ENCODE measurements at regions of chr2 and their contacts with region 1.

Region 1: DNA sequence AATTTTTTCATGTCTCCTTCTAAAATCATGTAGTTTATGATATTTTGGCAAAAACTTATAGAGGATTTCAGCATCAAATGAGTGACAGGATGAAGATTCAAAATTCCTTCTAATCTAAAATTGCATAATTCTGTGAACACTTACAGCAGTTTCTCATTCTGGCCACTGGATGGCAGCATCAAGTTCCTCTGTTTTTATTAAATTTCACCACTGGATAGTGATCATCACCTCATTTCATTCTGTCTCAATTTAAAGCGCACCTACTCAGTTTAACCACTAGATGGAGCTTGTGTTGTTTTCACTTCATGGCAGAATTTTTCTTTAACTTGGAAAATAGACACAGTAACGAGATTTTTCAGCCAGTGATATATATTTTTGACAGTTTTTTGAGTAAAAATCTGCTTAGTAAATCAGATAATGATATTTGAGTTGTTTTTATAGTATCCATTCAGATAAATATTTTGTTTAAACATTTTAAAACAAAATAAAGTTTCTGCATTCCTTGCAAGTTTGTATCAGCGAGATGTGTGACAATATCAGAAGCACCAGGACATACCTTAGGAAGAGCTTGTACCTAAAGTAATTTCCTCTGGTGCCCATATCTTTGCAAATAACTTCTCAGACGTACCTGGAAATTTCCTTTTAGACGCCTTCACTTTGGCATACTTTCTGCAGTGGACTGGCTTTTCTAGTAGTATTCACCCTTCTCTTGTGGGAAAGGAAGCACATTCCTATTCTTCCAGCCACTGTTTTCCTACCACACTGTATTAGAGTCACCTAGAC is 94.7 kb upstream of the ARHGAP15 start:
- DNase-seq: peak; percentile 78
- ATAC-seq: peak; percentile 88
- H3K4me3 Mint-ChIP-seq: no peak overlapping the region
- H3K27ac Mint-ChIP-seq: no peak overlapping the region
- H3K4me1 Mint-ChIP-seq: peaks cover 8% of the 10 kb centered on the region
- H3K27me3 Mint-ChIP-seq: peaks cover 6% of the 10 kb centered on the region

Region 2: DNA sequence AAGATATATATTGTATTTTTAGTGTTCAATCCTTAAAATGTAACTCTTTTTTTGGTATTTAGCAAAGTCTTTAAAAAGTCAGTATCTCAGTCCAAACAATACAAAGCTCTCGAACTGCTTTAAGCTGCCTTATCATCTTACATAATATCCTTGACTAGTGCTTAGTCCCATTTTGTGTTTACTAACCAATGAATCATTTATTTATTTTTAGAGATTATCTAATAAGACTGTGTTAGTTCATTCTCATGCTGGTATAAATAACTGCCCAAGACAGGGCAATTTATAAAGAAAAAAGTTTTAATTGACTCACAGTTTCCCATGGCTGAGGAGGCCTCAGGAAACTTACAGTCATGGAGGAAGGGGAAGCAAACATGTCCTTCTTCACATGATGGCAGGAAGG is 405.3 kb before region 1 on chr2:
- CTCF ChIA-PET with region 1: no interaction called
- POLR2A ChIA-PET with region 1: no interaction called
- DNase-seq: no peak
- ATAC-seq: no peak
- H3K4me3 Mint-ChIP-seq: no peak overlapping the region
- H3K27ac Mint-ChIP-seq: no peak overlapping the region
- H3K4me1 Mint-ChIP-seq: no peaks in the 10 kb centered on the region
- H3K27me3 Mint-ChIP-seq: no peaks in the 10 kb centered on the region

Region 3: GRCh38 chr2:142741764-142742269 is 292.7 kb before region 1 on chr2:
- CTCF ChIA-PET with region 1: no interaction called
- POLR2A ChIA-PET with region 1: no interaction called
- DNase-seq: no peak
- ATAC-seq: no peak
- H3K4me3 Mint-ChIP-seq: no peak overlapping the region
- H3K27ac Mint-ChIP-seq: no peak overlapping the region
- H3K4me1 Mint-ChIP-seq: no peaks in the 10 kb centered on the region
- H3K27me3 Mint-ChIP-seq: no peaks in the 10 kb centered on the region

Region 4: DNA sequence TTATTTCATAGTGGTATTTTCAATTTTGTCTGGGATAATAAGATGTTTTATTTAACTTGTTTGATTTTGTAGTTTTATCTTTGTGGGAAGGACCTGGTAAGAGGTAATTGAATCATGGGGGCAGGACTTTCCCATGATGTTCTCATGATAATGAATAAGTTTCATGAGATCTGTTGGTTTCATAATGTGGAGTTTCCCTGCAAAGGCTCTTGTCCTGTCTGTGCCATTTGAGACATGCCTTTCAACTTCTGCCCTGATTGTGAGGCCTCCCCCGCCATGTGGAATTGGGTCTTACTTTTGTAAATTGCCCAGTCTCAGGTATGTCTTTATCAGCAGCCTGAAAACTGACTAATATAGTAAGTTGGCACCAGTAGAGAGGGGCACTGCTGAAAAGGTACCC is 17.0 kb after region 1 on chr2:
- CTCF ChIA-PET with region 1: interaction called, 18 read pairs
- POLR2A ChIA-PET with region 1: interaction called, 3 read pairs
- DNase-seq: no peak
- ATAC-seq: no peak
- H3K4me3 Mint-ChIP-seq: no peak overlapping the region
- H3K27ac Mint-ChIP-seq: no peak overlapping the region
- H3K4me1 Mint-ChIP-seq: no peaks in the 10 kb centered on the region
- H3K27me3 Mint-ChIP-seq: peaks cover 4% of the 10 kb centered on the region

Region 5: DNA sequence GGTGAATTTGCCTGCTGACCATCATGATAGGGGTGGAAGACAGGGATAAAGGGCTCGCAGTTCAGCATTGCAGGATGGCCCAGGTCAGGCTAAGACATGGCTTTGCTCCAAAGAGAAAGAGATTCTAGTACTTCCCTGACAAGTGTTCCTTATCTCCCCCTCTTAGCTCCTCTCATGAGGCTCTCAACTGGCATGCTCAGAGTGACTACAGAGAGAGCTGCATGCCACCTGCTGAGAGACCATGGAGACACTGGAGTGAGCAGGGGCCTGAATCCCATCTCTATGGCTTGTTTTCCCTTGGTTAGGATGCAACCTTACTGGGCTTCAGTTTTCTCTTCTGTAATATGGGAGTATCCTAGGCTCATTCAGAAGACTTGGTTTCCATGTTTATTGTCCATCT is 189.1 kb after region 1 on chr2:
- CTCF ChIA-PET with region 1: interaction called, 17 read pairs
- POLR2A ChIA-PET with region 1: no interaction called
- DNase-seq: no peak
- ATAC-seq: no peak
- H3K4me3 Mint-ChIP-seq: no peak overlapping the region
- H3K27ac Mint-ChIP-seq: peak overlapping the region; percentile 17
- H3K4me1 Mint-ChIP-seq: peaks cover 46% of the 10 kb centered on the region
- H3K27me3 Mint-ChIP-seq: no peaks in the 10 kb centered on the region

Region 6: DNA sequence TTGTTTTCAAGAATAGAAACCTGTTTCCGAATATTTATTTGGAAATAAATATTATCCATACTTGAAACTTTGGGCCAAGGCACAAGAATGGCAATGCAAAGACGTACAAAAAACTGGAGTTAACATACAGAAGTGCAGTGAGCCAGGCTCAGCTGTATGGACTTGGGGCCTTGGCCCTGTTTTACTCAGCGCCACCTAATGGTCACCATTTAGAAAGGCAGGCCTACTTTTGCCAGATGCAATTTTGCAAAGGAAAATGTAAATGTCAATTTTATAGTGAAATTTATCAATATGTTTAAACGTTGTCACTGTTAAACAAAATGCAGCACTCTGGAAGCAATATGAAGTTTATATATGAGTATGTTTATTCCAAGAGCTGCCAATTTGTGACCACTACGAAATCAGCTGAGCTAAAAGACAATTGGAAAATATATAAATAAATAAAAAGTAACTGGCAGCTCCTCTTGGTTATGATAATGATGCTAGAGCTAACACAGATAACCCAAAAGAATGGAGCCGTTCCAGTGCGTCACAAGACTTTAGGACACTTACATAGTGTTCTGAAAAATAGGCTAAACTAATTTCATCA is 249.7 kb after region 1 on chr2:
- CTCF ChIA-PET with region 1: interaction called, 15 read pairs
- POLR2A ChIA-PET with region 1: no interaction called
- DNase-seq: peak; percentile 50
- ATAC-seq: no peak
- H3K4me3 Mint-ChIP-seq: no peak overlapping the region
- H3K27ac Mint-ChIP-seq: no peak overlapping the region
- H3K4me1 Mint-ChIP-seq: peaks cover 13% of the 10 kb centered on the region
- H3K27me3 Mint-ChIP-seq: no peaks in the 10 kb centered on the region

Measured in activated CD8-positive, alpha-beta T cell treated with anti-CD3 and anti-CD28 coated beads, Interleukin-2, amount 10 ng/mL, durations not matched to agents 7 days and 5 days (primary cell).